A549 (cell line): ENCODE measurements at regions of chr6 and their contacts with region 1.

Region 1: GRCh38 chr6:27893059-27893835 is 18.9 kb downstream of the OR2B2 start:
- DNase-seq: peak; percentile 83 to 97
- ATAC-seq: peak; percentile 51 to 68
- H3K4me3 ChIP-seq: peak overlapping the region; percentile 73
- H3K27ac ChIP-seq: peak overlapping the region; percentile 91 to 97
- H3K4me1 ChIP-seq: peaks cover 22% of the 10 kb centered on the region
- CTCF ChIP-seq: no peak
- EP300 ChIP-seq: no peak
- POLR2A ChIP-seq: peak; percentile 97
- RAD21 ChIP-seq: no peak

Region 2: GRCh38 chr6:26122793-26123674 is 1770.2 kb before region 1 on chr6:
- CTCF ChIA-PET with region 1: no interaction called
- POLR2A ChIA-PET with region 1: interaction called, 10 read pairs
- DNase-seq: peak; percentile 77 to 99
- ATAC-seq: peak; percentile 72 to 73
- H3K4me3 ChIP-seq: peak overlapping the region; percentile 93
- H3K27ac ChIP-seq: peak overlapping the region; percentile 98
- H3K4me1 ChIP-seq: peaks cover 45% of the 10 kb centered on the region
- CTCF ChIP-seq: no peak
- EP300 ChIP-seq: peak; percentile 52 to 62; a peak in 3 of 5 replicates
- POLR2A ChIP-seq: peak; percentile 72
- RAD21 ChIP-seq: 0 out of 5 replicates have a peak, but pooled peaks of 1 of the 2 experiments have one; percentile 1

Region 3: GRCh38 chr6:27772261-27773001 is 120.8 kb before region 1 on chr6:
- CTCF ChIA-PET with region 1: interaction called, 30 read pairs
- POLR2A ChIA-PET with region 1: no interaction called
- DNase-seq: peak; percentile 58 to 88
- ATAC-seq: peak; percentile 95 to 96
- H3K4me3 ChIP-seq: peak overlapping the region; percentile 26; the same call in 2 of the 3 replicates
- H3K27ac ChIP-seq: peak overlapping the region; percentile 19 to 73; a peak in 3 of 6 replicates
- H3K4me1 ChIP-seq: peaks cover 13% of the 10 kb centered on the region; the same call in 2 of the 3 replicates
- CTCF ChIP-seq: peak; percentile 79
- EP300 ChIP-seq: no peak
- POLR2A ChIP-seq: no peak
- RAD21 ChIP-seq: peak; percentile 48 to 63

Region 4: DNA sequence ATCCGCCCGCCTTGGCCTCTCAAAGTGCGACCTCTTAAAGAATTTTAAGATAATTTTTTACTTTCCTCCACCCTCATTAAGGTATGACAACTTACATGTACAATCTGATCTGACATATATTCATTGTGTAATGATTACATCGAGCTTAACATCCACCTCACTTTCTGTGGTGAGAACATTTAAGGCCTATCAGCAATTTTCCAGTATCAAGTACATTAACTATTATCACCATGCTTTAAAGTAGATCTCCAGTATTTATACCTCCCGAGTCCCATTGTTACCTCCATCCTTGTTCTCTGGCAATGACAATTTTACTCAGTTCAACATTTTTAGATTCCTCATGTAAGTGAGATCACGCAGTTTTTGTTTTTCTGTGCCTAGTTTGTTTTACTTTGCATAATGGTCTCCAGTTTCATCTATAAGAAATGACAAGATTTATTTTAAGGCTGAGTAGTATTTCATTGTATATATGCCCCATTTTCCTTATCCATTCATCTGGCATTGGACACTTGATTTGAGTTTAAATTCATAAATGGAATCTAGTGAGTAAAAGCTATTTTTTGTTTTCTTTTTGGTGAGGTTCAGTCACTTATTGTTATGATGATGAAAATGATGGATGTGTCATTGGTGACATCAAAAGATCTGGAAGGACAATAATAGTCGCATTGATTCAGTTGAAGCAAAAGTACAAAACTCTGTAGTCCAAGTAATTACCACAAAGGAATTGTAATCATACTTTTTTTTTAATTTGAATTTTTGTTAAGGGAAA is 68.0 kb before region 1 on chr6:
- CTCF ChIA-PET with region 1: interaction called, 40 read pairs
- POLR2A ChIA-PET with region 1: interaction called, 35 read pairs
- DNase-seq: no peak
- ATAC-seq: peak in 1 of 2 experiments; percentile 10; a peak in 2 of 6 replicates
- H3K4me3 ChIP-seq: peak overlapping the region; percentile 45
- H3K27ac ChIP-seq: peak overlapping the region; percentile 66 to 85
- H3K4me1 ChIP-seq: no peaks in the 10 kb centered on the region
- CTCF ChIP-seq: no peak
- EP300 ChIP-seq: no peak
- POLR2A ChIP-seq: no peak
- RAD21 ChIP-seq: no peak

Region 5: GRCh38 chr6:27871924-27872638 is 21.2 kb before region 1 on chr6:
- CTCF ChIA-PET with region 1: interaction called, 9 read pairs
- POLR2A ChIA-PET with region 1: interaction called, 127 read pairs
- DNase-seq: peak; percentile 59 to 90
- ATAC-seq: peak; percentile 84 to 86
- H3K4me3 ChIP-seq: peak overlapping the region; percentile 52
- H3K27ac ChIP-seq: peak overlapping the region; percentile 78 to 90
- H3K4me1 ChIP-seq: 0 out of 3 replicates have a peak, but pooled peaks cover 7% of the 10 kb centered on the region
- CTCF ChIP-seq: no peak
- EP300 ChIP-seq: no peak
- POLR2A ChIP-seq: peak; percentile 81
- RAD21 ChIP-seq: no peak

Region 6: DNA sequence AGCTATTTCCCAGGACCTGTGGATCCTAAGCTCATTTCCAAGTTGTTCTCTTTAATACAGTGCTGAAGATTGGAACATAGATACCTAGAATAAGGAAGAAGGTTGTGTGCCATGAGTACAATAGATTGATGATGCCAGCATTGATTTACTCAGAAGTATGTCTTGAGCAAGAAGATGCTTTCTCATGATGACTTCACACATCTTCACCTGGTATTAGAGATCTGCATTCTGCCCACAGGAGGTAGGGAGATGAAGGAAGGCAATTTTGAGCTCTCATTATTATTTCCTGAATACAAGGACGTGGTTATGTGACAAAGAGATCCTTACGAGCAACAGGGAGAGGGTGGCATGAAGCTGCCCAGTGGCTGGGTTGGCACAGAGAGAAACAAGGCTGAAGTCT is 167.2 kb after region 1 on chr6:
- CTCF ChIA-PET with region 1: no interaction called
- POLR2A ChIA-PET with region 1: no interaction called
- DNase-seq: no peak
- ATAC-seq: no peak
- H3K4me3 ChIP-seq: no peak overlapping the region
- H3K27ac ChIP-seq: no peak overlapping the region
- H3K4me1 ChIP-seq: no peaks in the 10 kb centered on the region
- CTCF ChIP-seq: no peak
- EP300 ChIP-seq: no peak
- POLR2A ChIP-seq: no peak
- RAD21 ChIP-seq: no peak